Heart left ventricle (tissue), 16 donors: ENCODE measurements at regions of chr12 and their contacts with region 1.

Region 1: DNA sequence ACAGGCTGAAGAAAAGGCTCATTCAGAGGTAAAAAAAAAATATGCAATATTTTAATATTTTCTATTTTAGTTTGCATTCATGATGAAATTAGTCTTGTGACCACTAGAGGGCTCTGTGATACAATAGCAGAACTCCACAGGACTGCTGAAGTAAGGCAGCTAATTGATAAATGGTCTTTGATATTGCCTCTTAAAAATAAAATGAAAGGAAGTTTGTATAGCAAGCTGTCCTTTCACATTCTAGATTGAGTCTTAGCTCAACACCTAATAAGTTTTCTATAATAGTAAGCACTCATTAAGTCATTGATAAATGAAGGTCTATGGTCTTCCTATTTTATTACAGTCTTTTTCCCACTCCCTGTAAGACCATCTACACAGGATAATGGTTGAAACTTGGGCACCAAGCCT is 315.7 kb downstream of the NAV3 start:
- DNase-seq: no peak
- ATAC-seq: no peak
- H3K4me3 ChIP-seq: no peak overlapping the region
- H3K27ac ChIP-seq: no peak overlapping the region
- H3K4me1 ChIP-seq: peaks cover 0 to 14% (median 0%) of the 10 kb centered on the region in 12 donors
- H3K27me3 ChIP-seq: no peaks in the 10 kb centered on the region
- CTCF ChIP-seq: peak; percentile 57 to 90 (median 73)
- POLR2A ChIP-seq: no peak

Region 2: DNA sequence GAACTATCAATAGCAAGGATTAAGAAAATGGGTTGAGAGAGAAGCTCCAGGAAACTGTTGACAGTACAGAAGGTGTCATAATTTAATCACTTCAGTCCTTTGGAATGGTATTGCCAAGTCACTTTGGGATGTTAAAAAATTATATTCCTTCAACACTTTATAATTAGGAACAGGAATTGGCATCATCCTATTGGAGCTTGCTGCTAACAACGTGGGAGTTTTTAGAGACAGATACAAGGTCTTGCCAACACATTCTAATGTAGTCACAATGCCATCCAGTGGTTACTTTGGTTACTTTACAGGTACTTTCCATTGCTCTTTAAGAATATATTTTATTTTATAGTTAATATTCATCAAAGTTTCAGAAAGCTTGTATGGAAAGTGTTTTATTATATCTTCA is 1028.3 kb after region 1 on chr12:
- intact Hi-C with region 1: loop called in 1 of 10 experiments (anchors 10 kb)
- DNase-seq: no peak
- ATAC-seq: peak in 2 of 4 donors; percentile 48 to 50
- H3K4me3 ChIP-seq: no peak overlapping the region
- H3K27ac ChIP-seq: no peak overlapping the region
- H3K4me1 ChIP-seq: no peaks in the 10 kb centered on the region
- H3K27me3 ChIP-seq: no peaks in the 10 kb centered on the region
- CTCF ChIP-seq: peak in 10 of 12 donors; percentile 5 to 41 (median 19)
- POLR2A ChIP-seq: no peak

Region 3: DNA sequence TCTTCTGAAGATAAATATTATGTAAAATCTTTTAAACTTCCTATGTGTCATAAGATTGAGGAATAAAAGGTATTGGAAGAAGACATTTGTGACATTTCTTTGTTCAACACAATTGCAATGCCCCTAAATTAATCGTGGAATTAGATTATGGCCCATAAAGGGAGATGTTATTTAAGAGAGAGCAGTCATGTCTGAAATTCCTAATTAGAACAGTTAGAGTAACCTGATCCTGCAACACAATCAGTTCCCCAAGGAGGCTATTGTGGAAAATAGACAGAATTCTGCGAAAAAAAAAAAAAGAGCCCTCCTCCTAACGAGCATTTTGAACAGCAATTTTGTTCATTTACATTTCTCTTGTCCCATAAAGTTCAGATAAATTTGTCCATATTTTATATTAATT is 1204.9 kb after region 1 on chr12:
- intact Hi-C with region 1: loop called in 1 of 10 experiments (anchors 5 kb)
- DNase-seq: no peak
- ATAC-seq: no peak
- H3K4me3 ChIP-seq: no peak overlapping the region
- H3K27ac ChIP-seq: no peak overlapping the region
- H3K4me1 ChIP-seq: no peaks in the 10 kb centered on the region
- H3K27me3 ChIP-seq: no peaks in the 10 kb centered on the region
- CTCF ChIP-seq: no peak
- POLR2A ChIP-seq: no peak

Region 4: GRCh38 chr12:79373896-79374499 is 1227.6 kb after region 1 on chr12:
- intact Hi-C with region 1: loop called in 2 of 10 experiments (anchors 5 to 10 kb)
- DNase-seq: no peak
- ATAC-seq: no peak
- H3K4me3 ChIP-seq: no peak overlapping the region
- H3K27ac ChIP-seq: no peak overlapping the region
- H3K4me1 ChIP-seq: no peaks in the 10 kb centered on the region
- H3K27me3 ChIP-seq: no peaks in the 10 kb centered on the region
- CTCF ChIP-seq: peak; percentile 41 to 65 (median 56)
- POLR2A ChIP-seq: no peak